ENCODE measurements at regions of chr5 and their contacts with region 1.

Region 1: DNA sequence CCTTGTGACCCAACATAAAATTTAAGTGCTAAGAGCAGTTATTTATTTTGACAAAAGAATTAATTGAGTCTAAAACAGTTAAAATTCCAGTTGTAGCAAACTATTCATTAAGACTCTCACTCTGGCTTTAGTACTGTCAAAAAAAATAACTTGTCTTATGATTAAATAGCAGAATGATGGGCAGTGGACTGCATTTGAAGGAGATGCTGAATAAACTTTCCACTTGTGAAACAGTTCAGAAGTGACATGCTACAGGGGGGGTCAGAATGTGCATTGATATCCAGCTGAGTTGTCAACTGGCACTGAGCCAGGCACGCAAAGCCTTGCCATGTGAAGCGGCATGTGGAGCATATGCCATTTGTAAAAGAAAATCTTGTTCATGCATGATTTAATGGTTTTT is 76.0 kb downstream of the FCHO2 start:
- DNase-seq: no peak
- H3K4me3 ChIP-seq: no peak overlapping the region
- H3K27ac ChIP-seq: peak overlapping the region; percentile 90
- H3K4me1 ChIP-seq: peaks cover 32% of the 10 kb centered on the region
- H3K27me3 ChIP-seq: no peaks in the 10 kb centered on the region
- CTCF ChIP-seq: no peak

Region 2: GRCh38 chr5:72955768-72956323 is 76.0 kb before region 1 on chr5 and contains the start of gene FCHO2:
- CTCF ChIA-PET with region 1: no interaction called
- POLR2A ChIA-PET with region 1: no interaction called
- intact Hi-C with region 1: loop called (anchors 1 kb)
- DNase-seq: peak; percentile 95 to 97
- H3K4me3 ChIP-seq: peak within 1 kb of the TSS; percentile 74
- H3K27ac ChIP-seq: peak within 1 kb of the TSS; percentile 99
- H3K4me1 ChIP-seq: peaks cover 58% of the 10 kb centered on the region
- H3K27me3 ChIP-seq: no peaks in the 10 kb centered on the region
- CTCF ChIP-seq: peak; percentile 84
- total RNA-seq, gene FCHO2: 13.6 and 26.1 TPM in 2 replicates

Measured in PC-9 (cell line).